ENCODE measurements at regions of chr3 and their contacts with region 1.

Region 1: DNA sequence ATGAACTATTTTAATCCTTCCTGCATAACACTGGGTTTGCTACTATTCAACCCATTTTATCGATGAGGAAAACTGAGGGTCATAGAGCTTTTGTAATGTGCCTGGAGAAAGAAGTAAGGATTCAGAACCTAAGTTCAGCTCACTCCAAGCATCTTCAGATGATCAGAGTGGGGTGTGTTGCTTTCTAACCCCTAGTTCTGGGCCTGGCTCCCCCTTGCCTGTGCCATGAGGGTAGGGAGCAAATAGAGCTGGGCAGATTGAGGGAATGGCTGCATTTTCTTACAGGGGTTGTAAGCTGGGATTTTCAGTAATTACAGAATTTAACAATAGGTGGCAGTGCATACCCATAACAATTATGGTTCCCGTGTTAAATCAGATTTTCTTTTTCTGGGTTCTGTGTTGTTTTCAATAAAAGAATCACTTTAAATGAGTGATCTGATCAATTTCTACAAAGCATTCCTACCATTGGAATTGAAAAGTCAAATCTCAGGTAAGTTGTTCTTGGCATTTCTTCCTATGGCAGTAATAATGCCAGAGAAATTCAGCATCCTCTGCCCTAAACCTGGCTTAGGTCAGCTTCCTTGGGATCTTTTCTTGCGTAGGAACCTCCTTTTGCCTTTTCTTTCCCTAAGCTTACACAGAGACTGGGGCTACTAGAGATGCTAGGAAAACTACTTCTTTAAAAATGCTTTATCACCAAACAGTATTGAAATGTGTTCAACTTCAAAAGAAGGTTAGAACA is 103.8 kb upstream of the IL12A start:
- DNase-seq: peak; percentile 75
- H3K4me3 ChIP-seq: no peak overlapping the region
- H3K27ac ChIP-seq: peak overlapping the region; percentile 46
- H3K4me1 ChIP-seq: peaks cover 34% of the 10 kb centered on the region
- H3K27me3 ChIP-seq: no peaks in the 10 kb centered on the region
- CTCF ChIP-seq: peak; percentile 27 to 37
- POLR2A ChIP-seq: no peak

Region 2: GRCh38 chr3:159828542-159828943 is 56.3 kb before region 1 on chr3:
- CTCF ChIA-PET with region 1: interaction called, 201 read pairs
- POLR2A ChIA-PET with region 1: interaction called, 3 read pairs
- dilution Hi-C with region 1: no loop called
- intact Hi-C with region 1: loop called (anchors 1 kb)
- DNase-seq: peak; percentile 80
- H3K4me3 ChIP-seq: no peak overlapping the region
- H3K27ac ChIP-seq: peak overlapping the region; percentile 32
- H3K4me1 ChIP-seq: peaks cover 32% of the 10 kb centered on the region
- H3K27me3 ChIP-seq: no peaks in the 10 kb centered on the region
- CTCF ChIP-seq: peak; percentile 28 to 42
- POLR2A ChIP-seq: no peak

Region 3: DNA sequence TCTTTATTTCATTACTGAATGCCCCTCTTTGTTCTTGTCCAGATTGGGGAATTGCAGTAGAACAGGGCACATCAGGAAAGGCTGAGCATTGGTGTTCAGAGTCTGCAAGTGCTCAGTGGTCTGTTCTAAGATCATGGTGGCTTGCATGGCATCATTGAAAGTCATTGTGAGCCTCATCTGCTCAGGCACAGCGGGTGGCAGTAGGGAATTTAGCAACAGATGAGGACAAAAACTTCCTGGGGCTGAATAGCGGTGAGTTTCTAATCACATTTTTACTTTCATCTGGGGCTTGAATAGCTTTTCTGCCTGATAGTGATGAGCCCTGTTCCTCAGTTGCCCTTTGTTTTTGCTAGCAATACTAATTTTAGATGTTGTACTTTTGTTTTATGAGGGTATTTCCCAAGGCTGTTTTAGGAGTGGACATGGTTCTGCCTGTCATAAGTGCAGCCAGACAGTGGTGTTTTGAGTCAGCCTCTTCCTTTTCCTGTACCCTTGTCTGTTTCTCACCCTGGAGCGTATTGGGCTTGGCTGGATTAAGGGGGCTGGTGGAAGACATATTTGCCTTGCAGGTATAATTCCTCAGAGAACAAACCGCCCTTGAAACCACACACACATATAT is 23.4 kb before region 1 on chr3:
- CTCF ChIA-PET with region 1: interaction called, 74 read pairs
- POLR2A ChIA-PET with region 1: interaction called, 6 read pairs
- dilution Hi-C with region 1: no loop called
- intact Hi-C with region 1: no loop called
- DNase-seq: peak; percentile 71
- H3K4me3 ChIP-seq: no peak overlapping the region
- H3K27ac ChIP-seq: peak overlapping the region; percentile 85
- H3K4me1 ChIP-seq: peaks cover 61% of the 10 kb centered on the region
- H3K27me3 ChIP-seq: no peaks in the 10 kb centered on the region
- CTCF ChIP-seq: no peak
- POLR2A ChIP-seq: no peak

Region 4: DNA sequence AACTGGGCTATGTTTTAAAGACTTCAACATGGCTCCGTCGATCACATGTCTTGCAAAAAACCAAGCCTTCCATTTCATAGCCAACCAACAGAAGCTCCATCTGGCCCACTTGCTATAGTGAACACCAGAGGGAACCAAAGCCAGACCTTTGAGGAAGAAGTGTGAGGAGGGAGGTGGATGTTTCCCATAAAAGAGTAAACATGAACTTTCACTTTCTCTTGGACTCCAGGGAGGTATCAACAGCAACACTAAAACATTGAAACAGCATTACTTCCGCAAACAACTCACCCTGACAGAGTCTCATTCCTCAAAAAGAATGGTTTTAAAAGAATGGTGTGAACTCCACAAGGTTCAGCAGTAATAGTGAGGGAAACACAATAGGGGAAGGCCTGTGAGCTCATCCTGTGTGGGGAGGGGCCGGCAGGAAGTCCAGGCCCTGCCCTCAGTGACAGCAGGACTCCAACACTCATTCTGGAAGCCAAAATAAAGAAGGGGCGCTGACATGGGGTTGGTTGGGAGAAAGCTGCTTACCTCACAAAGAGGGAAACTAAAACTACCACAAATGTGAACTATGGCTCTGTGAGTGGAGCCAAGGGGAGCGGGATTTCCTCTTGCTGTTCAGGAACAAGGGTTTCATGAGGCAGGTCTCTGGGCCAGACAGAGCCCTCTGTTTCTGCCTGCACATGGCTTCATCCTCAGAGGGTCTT is 44.8 kb after region 1 on chr3:
- CTCF ChIA-PET with region 1: interaction called, 15 read pairs
- POLR2A ChIA-PET with region 1: no interaction called
- dilution Hi-C with region 1: no loop called
- intact Hi-C with region 1: no loop called
- DNase-seq: peak; percentile 70
- H3K4me3 ChIP-seq: no peak overlapping the region
- H3K27ac ChIP-seq: peak overlapping the region; percentile 41
- H3K4me1 ChIP-seq: peaks cover 14% of the 10 kb centered on the region
- H3K27me3 ChIP-seq: no peaks in the 10 kb centered on the region
- CTCF ChIP-seq: peak; percentile 11 to 33
- POLR2A ChIP-seq: no peak

Region 5: GRCh38 chr3:160003520-160004128 is 118.8 kb after region 1 on chr3:
- CTCF ChIA-PET with region 1: interaction called, 227 read pairs
- POLR2A ChIA-PET with region 1: no interaction called
- dilution Hi-C with region 1: no loop called
- intact Hi-C with region 1: loop called (anchors 1 kb)
- DNase-seq: peak; percentile 68
- H3K4me3 ChIP-seq: no peak overlapping the region
- H3K27ac ChIP-seq: no peak overlapping the region
- H3K4me1 ChIP-seq: no peaks in the 10 kb centered on the region
- H3K27me3 ChIP-seq: no peaks in the 10 kb centered on the region
- CTCF ChIP-seq: peak; percentile 67
- POLR2A ChIP-seq: no peak

Region 6: GRCh38 chr3:160413613-160414248 is 528.9 kb after region 1 on chr3:
- CTCF ChIA-PET with region 1: interaction called, 5 read pairs
- POLR2A ChIA-PET with region 1: no interaction called
- dilution Hi-C with region 1: no loop called
- intact Hi-C with region 1: loop called (anchors 5 kb)
- DNase-seq: peak; percentile 86
- H3K4me3 ChIP-seq: no peak overlapping the region
- H3K27ac ChIP-seq: no peak overlapping the region
- H3K4me1 ChIP-seq: peaks cover 8% of the 10 kb centered on the region
- H3K27me3 ChIP-seq: no peaks in the 10 kb centered on the region
- CTCF ChIP-seq: peak; percentile 64 to 71
- POLR2A ChIP-seq: no peak